Right cardiac atrium (tissue), 5 donors: ENCODE measurements at regions of chr6 and their contacts with region 1.

Region 1: DNA sequence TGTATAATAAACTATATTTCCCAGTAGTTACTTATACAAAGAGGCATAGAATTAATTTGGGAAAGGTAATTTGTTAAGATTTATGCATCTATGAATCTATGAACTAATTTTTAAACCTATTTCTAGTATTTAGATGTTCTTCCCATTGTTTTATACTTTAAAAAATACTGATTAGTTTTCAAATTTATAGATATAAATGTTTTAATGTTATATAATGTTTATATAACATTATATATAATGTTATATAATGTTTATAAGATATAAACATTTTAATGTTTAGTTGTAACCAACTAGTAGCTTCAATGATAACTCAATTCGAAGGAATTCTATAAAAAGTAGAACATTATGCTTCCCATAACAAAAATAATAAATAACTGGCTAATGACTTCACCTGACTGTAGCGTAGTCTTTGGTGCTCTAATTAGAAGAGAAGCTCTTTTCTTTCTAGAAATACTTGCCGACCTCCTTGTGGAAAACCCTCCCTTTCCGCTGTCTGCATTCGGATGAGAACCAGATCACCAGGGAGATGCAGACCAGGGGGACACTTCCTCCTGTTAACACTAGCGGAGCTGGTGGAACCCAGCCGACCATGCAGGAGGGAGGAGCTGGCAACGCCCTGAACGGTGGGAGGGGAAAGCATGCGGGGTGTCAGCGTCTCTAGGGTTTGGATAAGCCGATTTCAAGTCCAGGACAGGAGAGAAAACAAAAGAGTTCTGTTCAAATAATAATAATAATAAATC is 158.4 kb downstream of the OR2B2 start:
- DNase-seq: peak; percentile 76 to 86 (median 84)
- ATAC-seq: peak; percentile 75 to 80
- H3K4me3 ChIP-seq: peak overlapping the region; percentile 68
- H3K27ac ChIP-seq: no peak overlapping the region
- H3K4me1 ChIP-seq: no peaks in the 10 kb centered on the region
- H3K27me3 ChIP-seq: no peaks in the 10 kb centered on the region

Region 2: GRCh38 chr6:27518881-27519795 is 234.7 kb before region 1 on chr6:
- intact Hi-C with region 1: loop called in 3 of 4 experiments (anchors 2 to 10 kb)
- DNase-seq: peak; percentile 56 to 80 (median 78)
- ATAC-seq: peak; percentile 94 to 96
- H3K4me3 ChIP-seq: peak overlapping the region; percentile 98
- H3K27ac ChIP-seq: peak overlapping the region; percentile 92
- H3K4me1 ChIP-seq: no peaks in the 10 kb centered on the region
- H3K27me3 ChIP-seq: no peaks in the 10 kb centered on the region